ENCODE measurements at regions of chr14 and their contacts with region 1.

Region 1: DNA sequence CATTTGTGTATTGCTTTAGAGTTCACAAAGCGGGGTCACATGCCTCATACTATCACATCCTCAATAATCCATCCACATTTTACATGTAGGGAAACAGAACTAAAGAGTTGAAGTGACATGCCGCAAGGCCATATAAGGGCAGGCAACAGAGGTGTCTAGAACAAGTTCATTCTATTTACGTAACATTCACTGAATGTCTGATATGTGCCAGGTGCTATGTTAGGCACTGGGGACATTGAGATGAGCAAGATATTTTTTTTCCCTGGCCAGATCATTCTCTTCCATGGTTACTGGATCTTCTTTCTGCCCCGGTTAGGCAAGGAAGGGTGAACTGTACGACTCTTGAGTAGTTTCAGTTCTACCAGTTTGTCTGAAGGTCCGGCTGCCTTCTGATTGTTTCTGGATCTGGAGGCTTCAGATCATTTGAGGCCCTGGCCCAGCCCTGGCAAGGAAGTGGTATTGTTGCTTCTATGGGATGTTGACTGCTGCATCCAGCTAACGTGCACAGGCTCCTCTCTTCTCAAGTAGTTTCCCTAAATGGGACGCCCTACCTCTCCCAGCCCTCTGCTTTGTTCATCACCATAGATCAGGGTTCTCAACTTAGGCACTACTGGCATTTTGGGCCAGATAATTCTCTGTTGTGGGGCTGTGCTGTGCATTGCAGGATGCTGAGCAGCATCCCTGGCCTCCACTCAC is 12.1 kb downstream of the GPATCH2L start:
- DNase-seq: no peak
- ATAC-seq: no peak
- H3K4me3 Mint-ChIP-seq: no peak overlapping the region
- H3K27ac Mint-ChIP-seq: no peak overlapping the region
- H3K4me1 Mint-ChIP-seq: peaks cover 5% of the 10 kb centered on the region
- H3K27me3 Mint-ChIP-seq: no peaks in the 10 kb centered on the region

Region 2: GRCh38 chr14:76090616-76091391 is 73.0 kb before region 1 on chr14:
- CTCF ChIA-PET with region 1: no interaction called
- POLR2A ChIA-PET with region 1: no interaction called
- DNase-seq: no peak
- ATAC-seq: no peak
- H3K4me3 Mint-ChIP-seq: no peak overlapping the region
- H3K27ac Mint-ChIP-seq: no peak overlapping the region
- H3K4me1 Mint-ChIP-seq: no peaks in the 10 kb centered on the region
- H3K27me3 Mint-ChIP-seq: no peaks in the 10 kb centered on the region

Region 3: DNA sequence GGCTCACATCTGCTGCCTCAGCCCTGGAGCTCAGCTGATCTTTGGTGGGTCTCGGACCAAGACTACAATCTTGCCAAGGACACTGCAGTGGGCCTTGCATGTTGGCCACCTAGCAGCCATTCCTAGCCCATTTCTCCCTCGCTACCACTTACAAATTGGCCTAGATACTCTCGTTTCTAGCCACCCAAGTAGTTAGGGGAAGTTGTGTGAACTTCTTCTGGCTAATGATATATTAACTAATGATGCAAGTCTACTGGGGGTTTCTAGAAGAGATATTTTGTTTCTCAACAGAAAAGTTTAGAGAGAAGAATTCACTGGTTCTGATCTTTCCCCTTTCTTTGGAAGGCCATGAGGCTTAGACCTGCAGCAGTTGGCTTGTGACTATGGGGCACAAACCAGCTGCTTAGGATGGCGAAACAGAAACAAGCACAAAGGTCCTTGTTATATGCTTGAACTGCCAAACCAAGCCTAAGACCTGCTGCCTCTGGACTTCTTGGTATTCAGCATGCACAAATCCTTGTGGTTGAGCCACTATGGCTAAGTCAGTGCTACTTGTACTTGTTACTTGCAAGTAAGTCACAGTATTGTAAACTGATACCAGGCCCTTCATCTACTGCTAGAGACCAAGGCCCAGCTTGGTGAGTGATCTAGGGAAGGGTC is 42.6 kb before region 1 on chr14:
- CTCF ChIA-PET with region 1: no interaction called
- POLR2A ChIA-PET with region 1: no interaction called
- DNase-seq: no peak
- ATAC-seq: no peak
- H3K4me3 Mint-ChIP-seq: no peak overlapping the region
- H3K27ac Mint-ChIP-seq: no peak overlapping the region
- H3K4me1 Mint-ChIP-seq: no peaks in the 10 kb centered on the region
- H3K27me3 Mint-ChIP-seq: no peaks in the 10 kb centered on the region

Region 4: DNA sequence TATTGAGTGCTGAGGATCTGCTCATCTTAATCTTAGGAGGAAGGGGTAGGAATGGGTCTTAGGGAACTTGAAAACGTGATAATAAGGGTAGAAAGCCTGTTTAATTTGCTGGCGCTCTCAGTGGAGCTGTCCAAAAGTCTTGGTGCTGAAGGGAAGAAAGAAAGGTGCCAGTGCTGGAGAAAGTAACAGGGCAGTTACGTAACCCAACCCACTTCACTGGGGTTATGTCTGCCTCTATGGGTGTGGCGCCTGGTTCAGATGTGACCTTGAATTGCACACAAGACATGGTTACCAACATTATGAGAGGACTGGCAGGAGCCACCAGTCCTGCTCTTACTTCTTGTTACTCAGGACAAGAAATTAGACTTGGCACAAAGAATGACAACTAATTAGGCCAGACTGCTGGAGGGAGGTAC is 30.7 kb before region 1 on chr14:
- CTCF ChIA-PET with region 1: no interaction called
- POLR2A ChIA-PET with region 1: no interaction called
- DNase-seq: peak; percentile 41
- ATAC-seq: no peak
- H3K4me3 Mint-ChIP-seq: no peak overlapping the region
- H3K27ac Mint-ChIP-seq: no peak overlapping the region
- H3K4me1 Mint-ChIP-seq: peaks cover 1% of the 10 kb centered on the region
- H3K27me3 Mint-ChIP-seq: peaks cover 51% of the 10 kb centered on the region

Region 5: DNA sequence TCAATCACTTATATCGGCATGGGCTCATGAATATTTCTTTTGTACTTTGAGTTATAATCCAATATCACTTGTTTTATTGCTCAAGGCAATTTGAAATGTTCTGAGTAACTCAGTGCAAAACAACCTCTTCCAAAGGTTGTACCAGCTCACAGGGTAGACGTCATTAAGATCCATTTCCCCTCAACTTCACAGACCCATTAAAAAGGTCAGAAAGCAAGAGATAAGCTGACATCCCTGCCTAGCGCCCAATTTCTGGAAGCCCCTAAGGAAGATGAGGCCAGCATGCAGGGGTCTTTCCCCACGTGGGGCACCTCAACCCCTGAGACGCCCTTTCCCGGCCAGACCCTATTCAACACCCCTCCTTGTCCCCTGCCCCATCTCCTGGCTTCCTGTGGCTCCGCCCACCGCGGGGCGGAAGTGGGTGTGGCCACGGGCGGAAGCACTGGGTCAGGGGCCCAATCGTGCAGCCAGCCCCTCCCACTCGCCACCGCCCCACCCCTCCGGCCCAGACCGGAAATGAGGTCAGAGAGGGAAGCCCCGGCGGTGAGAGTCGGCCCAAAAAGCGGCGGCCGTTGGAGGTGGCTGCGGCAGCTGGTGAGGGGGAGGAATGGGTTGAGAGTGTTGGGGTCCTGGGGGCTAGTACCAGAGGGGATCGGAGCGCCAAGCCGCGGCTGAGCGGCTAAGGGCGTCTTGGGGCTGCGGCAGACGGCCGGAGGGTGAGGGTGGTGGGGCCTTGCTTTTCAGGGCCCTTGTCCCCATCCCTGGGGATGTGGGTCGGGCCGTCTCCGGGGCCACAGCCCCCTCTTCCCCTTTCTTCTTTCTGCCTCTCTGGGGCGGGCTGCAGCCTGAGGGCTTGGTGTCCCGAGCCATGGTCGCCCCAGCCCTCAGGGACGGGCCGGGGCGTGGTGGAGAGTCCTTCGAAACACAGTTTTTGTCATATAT is 12.1 kb before region 1 on chr14 and contains the start of gene GPATCH2L:
- CTCF ChIA-PET with region 1: interaction called, 4 read pairs
- POLR2A ChIA-PET with region 1: interaction called, 13 read pairs
- DNase-seq: peak; percentile 98
- ATAC-seq: peak; percentile 89
- H3K4me3 Mint-ChIP-seq: peak within 1 kb of the TSS; percentile 92
- H3K27ac Mint-ChIP-seq: peak within 1 kb of the TSS; percentile 99
- H3K4me1 Mint-ChIP-seq: peaks cover 52% of the 10 kb centered on the region
- H3K27me3 Mint-ChIP-seq: peaks cover 4% of the 10 kb centered on the region
- total RNA-seq, gene GPATCH2L: 52.8 to 55.9 TPM